ENCODE measurements at regions of chr14 and their contacts with region 1.

Region 1: GRCh38 chr14:50363714-50364111 is 33.0 kb downstream of the CDKL1 start:
- DNase-seq: peak; percentile 73
- H3K4me3 Mint-ChIP-seq: peak overlapping the region; percentile 72
- H3K27ac Mint-ChIP-seq: peak overlapping the region; percentile 84
- H3K4me1 Mint-ChIP-seq: peaks cover 17% of the 10 kb centered on the region
- H3K27me3 Mint-ChIP-seq: no peaks in the 10 kb centered on the region

Region 2: DNA sequence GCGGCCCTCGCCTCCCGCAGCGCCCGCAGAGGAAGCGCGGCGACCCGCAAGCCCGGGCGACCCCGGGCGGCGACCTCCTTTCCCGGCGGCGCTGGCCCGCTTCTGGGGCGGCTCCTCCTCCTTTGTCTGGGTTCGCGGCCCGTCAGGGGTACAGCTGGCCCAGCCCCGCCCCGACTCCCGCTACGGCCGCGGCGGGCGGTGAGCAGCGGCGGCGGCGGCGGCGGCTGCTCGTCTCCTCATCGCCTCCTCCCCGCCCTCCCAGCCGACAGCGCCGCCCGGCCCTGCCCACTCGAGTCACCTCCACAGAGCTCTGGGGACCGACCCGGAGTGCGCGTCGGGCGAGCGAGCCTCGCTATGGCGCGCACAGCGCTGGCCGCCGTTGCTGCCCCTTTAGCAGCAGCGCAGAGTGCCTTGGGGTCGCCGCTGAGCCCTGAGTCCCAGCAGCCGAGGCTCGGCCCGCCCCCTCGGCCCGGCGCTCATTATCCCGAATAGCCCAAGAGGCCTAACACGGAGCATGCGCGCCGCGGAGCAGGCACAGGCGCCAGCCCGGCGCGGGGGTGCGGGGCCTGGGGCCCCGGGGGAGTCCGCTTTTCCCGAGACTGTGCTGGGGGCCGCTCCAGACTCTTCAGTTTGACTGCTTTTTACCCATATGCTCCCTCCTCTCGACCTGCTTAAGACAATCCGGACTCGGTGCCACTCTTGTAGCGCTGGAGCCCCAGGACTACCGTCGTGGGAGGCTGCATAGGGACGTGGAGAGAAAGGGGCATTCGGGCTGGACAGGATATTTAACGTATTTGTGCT is 132.0 kb before region 1 on chr14 and contains the start of gene SOS2:
- CTCF ChIA-PET with region 1: no interaction called
- POLR2A ChIA-PET with region 1: no interaction called
- intact Hi-C with region 1: loop called (anchors 5 kb)
- DNase-seq: peak; percentile 86
- H3K4me3 Mint-ChIP-seq: peak within 1 kb of the TSS; percentile 78
- H3K27ac Mint-ChIP-seq: peak within 1 kb of the TSS; percentile 85
- H3K4me1 Mint-ChIP-seq: peaks cover 40% of the 10 kb centered on the region
- H3K27me3 Mint-ChIP-seq: no peaks in the 10 kb centered on the region
- total RNA-seq, gene SOS2: 19.6 to 20.9 TPM

Region 3: DNA sequence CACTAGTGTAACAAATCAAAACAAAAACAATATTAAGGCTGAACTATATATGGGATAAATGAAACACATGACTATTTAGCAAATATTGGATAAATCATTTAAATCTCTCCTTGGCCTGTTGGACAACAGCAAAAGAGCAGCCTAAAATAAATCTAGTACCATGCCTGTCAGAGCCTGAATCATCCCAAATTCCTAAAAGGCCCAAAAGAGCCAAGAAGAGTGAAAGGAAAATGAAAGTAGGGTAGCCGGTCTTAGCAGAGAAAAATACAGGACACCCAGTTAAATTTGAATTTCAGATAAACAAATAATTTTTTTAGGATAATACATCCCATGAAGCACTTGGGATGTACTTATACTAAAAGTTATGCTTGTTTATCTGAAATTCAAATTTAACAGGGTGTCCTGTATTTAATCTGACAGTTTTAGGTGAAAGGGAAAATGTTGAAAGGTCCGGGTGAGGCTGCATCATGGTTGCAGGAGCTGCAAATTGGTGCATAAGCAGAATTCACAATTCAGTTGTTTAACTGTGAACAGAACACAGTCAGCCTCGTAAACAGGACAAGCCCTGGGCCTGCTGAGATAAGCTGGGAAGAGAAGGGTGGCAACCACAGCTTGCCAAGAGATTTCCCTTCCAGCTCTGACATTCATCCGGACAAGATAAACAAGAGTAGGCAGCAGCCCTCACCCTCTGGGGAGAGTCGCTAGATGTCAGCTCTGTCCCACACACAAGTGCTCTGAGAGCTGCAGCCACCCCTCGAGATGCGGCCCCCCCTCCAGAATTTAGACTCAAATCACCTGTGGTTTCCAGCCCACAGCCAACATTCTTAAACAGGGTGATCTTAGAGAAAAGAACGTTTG is 21.3 kb before region 1 on chr14:
- CTCF ChIA-PET with region 1: interaction called, 4 read pairs
- POLR2A ChIA-PET with region 1: no interaction called
- intact Hi-C with region 1: loop called (anchors 1 kb)
- DNase-seq: peak; percentile 56
- H3K4me3 Mint-ChIP-seq: no peak overlapping the region
- H3K27ac Mint-ChIP-seq: no peak overlapping the region
- H3K4me1 Mint-ChIP-seq: peaks cover 22% of the 10 kb centered on the region
- H3K27me3 Mint-ChIP-seq: peaks cover 4% of the 10 kb centered on the region

Region 4: GRCh38 chr14:50377550-50378085 is 13.9 kb after region 1 on chr14:
- CTCF ChIA-PET with region 1: no interaction called
- POLR2A ChIA-PET with region 1: no interaction called
- intact Hi-C with region 1: no loop called
- DNase-seq: no peak
- H3K4me3 Mint-ChIP-seq: no peak overlapping the region
- H3K27ac Mint-ChIP-seq: no peak overlapping the region
- H3K4me1 Mint-ChIP-seq: no peaks in the 10 kb centered on the region
- H3K27me3 Mint-ChIP-seq: no peaks in the 10 kb centered on the region

Region 5: GRCh38 chr14:50396631-50397390 is 33.1 kb after region 1 on chr14 and contains the start of gene CDKL1:
- CTCF ChIA-PET with region 1: interaction called, 3 read pairs
- POLR2A ChIA-PET with region 1: interaction called, 3 read pairs
- intact Hi-C with region 1: loop called (anchors 2 kb)
- DNase-seq: peak; percentile 57
- H3K4me3 Mint-ChIP-seq: peak within 1 kb of the TSS; percentile 82
- H3K27ac Mint-ChIP-seq: no peak within 1 kb of the TSS
- H3K4me1 Mint-ChIP-seq: peaks cover 11% of the 10 kb centered on the region
- H3K27me3 Mint-ChIP-seq: peaks cover 4% of the 10 kb centered on the region
- total RNA-seq, gene CDKL1: 2.4 to 3.4 TPM

Region 6: DNA sequence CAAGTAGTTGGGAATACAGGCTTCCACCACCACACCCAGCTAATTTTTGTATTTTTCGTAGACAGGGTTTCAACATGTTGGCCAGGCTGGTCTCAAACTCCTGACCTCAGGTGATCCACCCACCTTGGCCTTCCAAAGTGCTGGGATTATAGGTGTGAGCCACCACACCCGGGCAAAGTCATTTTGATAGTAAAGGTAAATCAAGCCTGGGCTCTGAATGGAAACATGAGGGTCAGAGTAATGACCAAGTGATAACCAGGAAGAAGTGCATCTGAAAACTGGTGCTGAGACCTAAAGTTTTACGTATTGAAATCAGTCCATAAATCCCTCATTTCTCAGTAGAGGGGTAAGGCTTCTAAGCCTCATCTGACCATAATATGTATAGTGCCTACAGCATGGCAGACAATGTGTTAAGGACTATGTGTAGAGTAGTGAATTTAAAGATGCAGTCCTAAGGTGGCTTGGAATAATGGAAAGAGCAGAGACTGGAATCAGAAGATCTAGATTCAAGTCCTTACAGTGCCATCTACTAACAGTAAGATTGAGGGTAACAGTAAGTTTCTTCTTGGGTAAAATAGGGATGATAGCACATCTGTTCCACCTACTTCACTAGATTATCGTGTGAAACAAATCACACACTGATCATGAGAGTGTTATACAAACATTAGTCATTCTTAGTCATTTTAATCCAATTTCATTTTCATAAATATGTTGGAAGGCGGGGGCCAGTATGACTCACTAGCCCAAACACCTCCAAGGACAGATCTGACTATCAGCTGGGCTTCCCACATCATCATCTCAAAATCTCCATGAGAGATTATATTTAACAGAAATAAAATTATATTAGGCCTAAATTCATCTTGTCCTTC is 157.5 kb after region 1 on chr14:
- CTCF ChIA-PET with region 1: no interaction called
- POLR2A ChIA-PET with region 1: interaction called, 5 read pairs
- intact Hi-C with region 1: loop called (anchors 1 kb)
- DNase-seq: peak; percentile 84
- H3K4me3 Mint-ChIP-seq: peak overlapping the region; percentile 25
- H3K27ac Mint-ChIP-seq: peak overlapping the region; percentile 85
- H3K4me1 Mint-ChIP-seq: peaks cover 56% of the 10 kb centered on the region
- H3K27me3 Mint-ChIP-seq: no peaks in the 10 kb centered on the region

Region 7: DNA sequence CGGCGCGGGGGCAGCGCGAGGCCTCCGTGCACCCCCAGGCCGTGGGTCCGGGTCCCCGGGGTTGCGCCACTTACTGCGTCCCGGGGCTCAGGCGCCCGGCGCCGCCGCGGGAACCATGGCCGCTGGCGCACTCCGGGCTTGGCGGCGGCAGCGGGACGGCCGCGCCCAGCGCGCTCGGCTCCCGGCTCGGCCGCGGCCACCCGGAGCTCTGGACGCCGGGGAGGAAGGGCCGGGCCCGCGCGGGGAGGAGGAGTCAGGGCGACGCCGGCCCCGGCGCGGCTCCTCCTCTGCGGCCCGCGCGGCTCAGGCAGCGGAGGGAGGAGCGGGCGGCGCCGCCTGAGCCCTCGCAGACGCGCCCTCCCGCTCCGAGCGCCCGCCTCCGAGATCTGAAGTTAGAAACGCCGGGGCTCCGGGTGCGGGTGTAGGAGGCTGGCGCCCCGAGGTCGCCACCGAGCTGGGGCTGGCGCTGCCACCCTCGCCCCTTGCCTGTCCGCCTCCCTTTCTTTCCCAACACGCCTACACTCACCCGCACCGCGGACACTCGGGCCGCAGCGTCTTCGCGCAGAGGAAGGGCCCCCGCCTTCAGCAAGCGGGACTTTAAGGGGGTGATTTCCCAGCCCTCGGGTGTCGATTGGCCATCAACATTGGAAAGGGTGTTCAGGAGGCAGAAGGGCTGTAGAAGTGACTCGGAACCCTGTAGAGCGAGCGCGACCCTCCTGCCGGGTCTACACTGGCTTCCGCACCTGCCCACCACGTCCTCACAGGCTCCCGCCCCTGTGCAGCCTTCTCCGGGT is 467.4 kb after region 1 on chr14 and contains the start of gene NIN:
- CTCF ChIA-PET with region 1: no interaction called
- POLR2A ChIA-PET with region 1: no interaction called
- intact Hi-C with region 1: loop called (anchors 5 kb)
- DNase-seq: peak; percentile 77
- H3K4me3 Mint-ChIP-seq: peak within 1 kb of the TSS; percentile 92
- H3K27ac Mint-ChIP-seq: peak within 1 kb of the TSS; percentile 86
- H3K4me1 Mint-ChIP-seq: peaks cover 54% of the 10 kb centered on the region
- H3K27me3 Mint-ChIP-seq: peaks cover 6% of the 10 kb centered on the region
- total RNA-seq, gene NIN: 44.7 to 44.8 TPM

Measured in activated CD4-positive, alpha-beta memory T cell treated with anti-CD3 and anti-CD28 coated beads for 36 hours (primary cell).